Stomach (tissue), 19 donors: ENCODE measurements at regions of chr1 and their contacts with region 1.

Region 1: GRCh38 chr1:46527474-46528296 is 23.8 kb downstream of the KNCN start:
- DNase-seq: peak; percentile 88 to 92
- H3K4me3 ChIP-seq: no peak overlapping the region
- H3K27ac ChIP-seq: no peak overlapping the region
- H3K4me1 ChIP-seq: peaks cover 4 to 18% (median 6%) of the 10 kb centered on the region in 4 donors
- H3K27me3 ChIP-seq: peaks cover 0 to 78% (median 17%) of the 10 kb centered on the region in 3 donors
- CTCF ChIP-seq: peak in 5 of 7 experiments; percentile 89 to 94 (median 92)
- EP300 ChIP-seq: no peak
- POLR2A ChIP-seq: no peak

Region 2: GRCh38 chr1:46406881-46407608 is 120.6 kb before region 1 on chr1:
- intact Hi-C with region 1: loop called (anchors 5 kb)
- DNase-seq: no peak
- H3K4me3 ChIP-seq: peak overlapping the region; percentile 7 to 26 (median 24)
- H3K27ac ChIP-seq: no peak overlapping the region
- H3K4me1 ChIP-seq: peaks cover 12 to 29% (median 17%) of the 10 kb centered on the region in 4 donors
- H3K27me3 ChIP-seq: no peaks in the 10 kb centered on the region
- CTCF ChIP-seq: no peak
- EP300 ChIP-seq: no peak
- POLR2A ChIP-seq: no peak

Region 3: DNA sequence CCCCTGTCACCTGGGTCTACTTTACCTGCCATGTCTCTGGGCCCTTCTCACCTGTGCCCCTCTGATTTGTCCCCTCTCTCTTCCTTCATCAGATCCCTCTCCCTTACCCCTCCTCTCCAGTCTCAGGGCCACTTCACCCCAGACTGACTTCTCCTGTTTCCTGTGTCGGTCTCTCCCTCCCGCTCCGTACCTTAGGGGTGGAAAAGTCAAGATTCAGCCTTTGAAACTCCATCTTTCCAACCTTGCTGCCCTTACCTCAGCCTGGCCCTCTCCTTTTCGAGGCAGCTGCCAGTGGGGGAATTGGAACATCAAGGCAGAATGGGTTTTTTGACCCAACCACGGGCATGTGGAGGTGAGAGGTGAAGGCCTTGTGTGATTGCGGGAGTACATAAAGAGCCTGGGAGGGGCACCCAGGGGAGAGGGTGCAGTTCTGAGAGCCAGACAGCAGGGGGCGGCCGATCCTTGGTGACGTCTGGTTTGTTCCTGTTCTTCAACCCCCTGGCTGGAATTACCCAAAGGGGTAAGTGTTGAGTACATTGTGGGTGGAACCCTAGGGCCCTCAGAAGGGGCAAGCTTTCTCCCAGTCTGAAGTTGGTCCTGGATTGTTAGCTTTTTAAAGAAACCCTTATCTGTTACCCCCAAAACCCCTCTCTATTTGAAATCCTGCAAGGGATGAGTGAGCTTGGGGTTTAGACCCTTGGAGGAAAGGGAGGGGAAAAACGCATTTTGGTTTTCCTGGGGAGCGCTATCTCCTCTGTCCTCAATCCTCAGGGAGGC is 50.3 kb before region 1 on chr1:
- intact Hi-C with region 1: loop called (anchors 5 kb)
- DNase-seq: peak; percentile 85 to 90
- H3K4me3 ChIP-seq: no peak overlapping the region
- H3K27ac ChIP-seq: no peak overlapping the region
- H3K4me1 ChIP-seq: peaks cover 0 to 4% (median 0%) of the 10 kb centered on the region in 4 donors
- H3K27me3 ChIP-seq: peaks cover 0 to 83% (median 12%) of the 10 kb centered on the region in 3 donors
- CTCF ChIP-seq: peak in 5 of 7 experiments; percentile 78 to 93 (median 90)
- EP300 ChIP-seq: no peak
- POLR2A ChIP-seq: no peak